Psoas muscle (tissue), 8 donors: ENCODE measurements at regions of chr16 and their contacts with region 1.

Region 1: DNA sequence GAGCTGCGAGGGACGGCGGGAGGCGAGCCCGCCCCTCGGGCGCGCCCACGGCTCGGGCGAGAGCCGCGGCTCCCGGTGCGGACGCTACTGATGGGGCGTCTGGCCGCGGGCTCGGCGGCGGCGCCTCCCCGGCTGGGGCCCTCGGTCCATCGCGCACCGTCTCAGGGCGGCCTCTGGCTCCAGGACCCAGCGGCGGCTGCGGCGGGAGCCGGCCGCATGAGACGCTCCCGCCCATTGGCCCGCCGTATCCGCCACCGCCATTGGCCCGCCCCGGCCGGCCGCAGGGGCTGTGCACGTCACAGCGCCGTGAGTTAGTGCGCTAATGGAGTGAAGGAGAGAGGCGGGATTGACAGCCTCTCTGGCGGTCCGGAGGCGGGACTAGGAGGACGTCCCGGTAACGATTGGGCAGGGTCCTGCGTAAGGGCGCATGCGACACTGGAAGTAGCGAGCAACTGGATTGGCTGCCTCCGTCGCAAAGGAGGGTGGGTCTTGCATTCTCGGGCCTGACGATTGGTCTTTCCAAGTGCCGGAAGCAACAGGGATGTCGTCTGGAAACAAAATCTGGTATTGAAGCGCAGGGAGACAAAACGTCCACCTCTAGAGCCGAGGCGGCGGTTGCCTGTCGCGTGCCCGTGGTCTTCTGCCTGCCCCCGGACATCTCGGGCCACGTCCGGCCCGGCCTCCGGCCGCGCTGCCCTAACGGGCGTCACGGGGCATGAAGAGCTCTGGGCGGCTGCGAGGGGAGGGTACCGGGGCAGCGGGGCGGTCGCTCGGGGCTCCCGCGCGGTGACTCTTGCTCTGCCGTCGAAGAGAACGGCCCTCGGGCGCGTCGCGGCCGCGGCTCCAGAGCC is at the start of gene ANKRD11:
- DNase-seq: peak; percentile 99 to 100
- ATAC-seq: peak; percentile 91 to 96 (median 95)
- H3K4me3 ChIP-seq: peak within 1 kb of the TSS; percentile 77
- H3K27ac ChIP-seq: peak within 1 kb of the TSS; percentile 93
- H3K4me1 ChIP-seq: peaks cover 49% of the 10 kb centered on the region
- H3K27me3 ChIP-seq: no peaks in the 10 kb centered on the region
- CTCF ChIP-seq: no peak
- total RNA-seq, gene ANKRD11: 52.3 to 72.8 (median 63.8) TPM

Region 2: DNA sequence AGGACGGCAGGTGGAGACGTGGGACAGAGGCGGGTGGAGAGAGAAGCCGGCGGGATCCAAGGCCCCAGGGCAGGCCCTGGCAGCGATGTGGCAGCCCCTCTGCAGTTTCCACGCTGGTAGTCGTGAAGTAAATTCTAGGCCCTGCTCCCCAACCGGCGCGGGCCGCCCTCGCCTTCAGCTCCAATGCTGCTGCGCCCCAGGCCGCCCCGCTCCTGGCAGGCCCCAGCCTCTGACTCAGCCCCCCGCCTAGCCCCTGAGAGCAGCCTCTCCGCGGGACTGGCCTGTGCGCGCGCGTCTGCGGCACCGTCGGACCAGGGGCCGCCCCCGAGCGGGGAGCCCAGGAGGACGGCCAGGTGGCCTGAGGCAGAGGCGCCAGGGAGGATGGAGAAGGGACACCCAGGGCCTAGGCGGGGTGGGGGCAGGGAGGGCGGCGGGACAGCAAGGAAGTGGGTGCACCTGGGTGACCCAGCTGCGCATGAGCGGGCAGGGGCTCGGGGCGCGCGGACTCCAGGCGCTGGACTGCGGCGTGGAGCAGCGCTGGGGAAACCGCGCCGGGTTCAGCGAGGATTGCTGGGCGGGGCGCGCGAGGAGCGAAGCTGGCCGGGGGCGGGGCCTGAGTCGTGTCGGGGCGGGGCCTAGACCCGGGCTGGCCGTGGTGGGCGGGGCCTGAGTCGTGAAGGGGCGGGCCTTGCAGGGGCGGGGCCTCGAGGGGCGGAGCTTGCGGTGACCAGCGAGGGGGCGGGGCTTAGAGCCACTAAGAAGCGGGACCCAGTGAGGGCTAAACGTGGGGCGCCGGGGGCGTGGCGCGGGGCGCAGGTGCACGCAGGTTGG is 243.5 kb before region 1 on chr16:
- intact Hi-C with region 1: loop called in 1 of 2 experiments (anchors 5 kb)
- DNase-seq: peak; percentile 88 to 94
- ATAC-seq: peak; percentile 97 to 98 (median 97)
- H3K4me3 ChIP-seq: peak overlapping the region; percentile 63
- H3K27ac ChIP-seq: no peak overlapping the region
- H3K4me1 ChIP-seq: no peaks in the 10 kb centered on the region
- H3K27me3 ChIP-seq: peaks cover 0 to 3% (median 0%) of the 10 kb centered on the region in 3 donors
- CTCF ChIP-seq: no peak

Region 3: GRCh38 chr16:89330177-89330856 is 160.3 kb before region 1 on chr16:
- intact Hi-C with region 1: loop called in 1 of 2 experiments (anchors 5 kb)
- DNase-seq: peak in 1 of 2 donors; percentile 69
- ATAC-seq: peak; percentile 10 to 38 (median 28)
- H3K4me3 ChIP-seq: peak overlapping the region; percentile 25
- H3K27ac ChIP-seq: peak overlapping the region; percentile 96
- H3K4me1 ChIP-seq: peaks cover 78% of the 10 kb centered on the region
- H3K27me3 ChIP-seq: no peaks in the 10 kb centered on the region
- CTCF ChIP-seq: no peak

Region 4: DNA sequence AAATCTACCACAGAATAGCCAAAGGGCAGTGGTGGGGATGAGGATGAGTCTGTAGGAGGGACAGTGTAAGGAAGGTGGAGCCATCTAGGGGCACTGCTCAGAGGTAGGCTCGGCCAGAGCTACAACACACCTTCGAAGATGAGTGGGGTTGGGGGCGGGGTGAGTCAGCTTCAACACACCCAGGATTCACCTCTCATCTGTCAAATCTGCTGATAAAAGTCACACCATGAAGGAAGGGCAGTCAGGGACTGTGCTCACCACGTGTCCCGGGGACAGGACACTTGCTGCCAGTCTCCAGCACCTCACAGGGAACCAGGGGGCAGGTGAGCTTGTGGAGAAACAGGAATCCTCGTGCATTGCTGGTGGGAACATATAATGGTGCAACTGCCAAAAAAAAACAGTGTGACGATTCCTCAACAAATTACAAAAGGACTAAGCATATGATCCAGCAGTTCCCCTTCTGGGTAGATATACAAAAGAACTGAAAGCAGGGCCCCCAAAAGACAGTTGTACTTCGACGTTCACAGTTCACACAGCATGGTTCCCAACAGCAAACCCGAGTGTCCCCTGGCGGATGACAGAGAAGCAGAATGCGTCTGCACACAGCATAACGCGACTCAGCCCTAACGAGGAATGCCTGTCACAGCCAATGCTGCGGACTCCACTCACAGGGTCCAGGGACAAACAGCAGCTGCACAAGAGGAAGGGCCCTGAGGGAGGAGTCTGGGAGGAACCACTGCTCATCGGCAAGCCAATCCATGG is 133.4 kb before region 1 on chr16:
- intact Hi-C with region 1: loop called in 1 of 2 experiments (anchors 10 kb)
- DNase-seq: peak; percentile 63 to 80
- ATAC-seq: peak; percentile 67 to 76 (median 70)
- H3K4me3 ChIP-seq: no peak overlapping the region
- H3K27ac ChIP-seq: peak overlapping the region; percentile 82
- H3K4me1 ChIP-seq: peaks cover 91% of the 10 kb centered on the region
- H3K27me3 ChIP-seq: no peaks in the 10 kb centered on the region
- CTCF ChIP-seq: peak; percentile 26